Posterior vena cava (tissue), 2 donors: ENCODE measurements at regions of chr6 and their contacts with region 1.

Region 1: GRCh38 chr6:29649701-29650673 is 6.9 kb upstream of the MOG start:
- DNase-seq: peak; percentile 100

Region 2: DNA sequence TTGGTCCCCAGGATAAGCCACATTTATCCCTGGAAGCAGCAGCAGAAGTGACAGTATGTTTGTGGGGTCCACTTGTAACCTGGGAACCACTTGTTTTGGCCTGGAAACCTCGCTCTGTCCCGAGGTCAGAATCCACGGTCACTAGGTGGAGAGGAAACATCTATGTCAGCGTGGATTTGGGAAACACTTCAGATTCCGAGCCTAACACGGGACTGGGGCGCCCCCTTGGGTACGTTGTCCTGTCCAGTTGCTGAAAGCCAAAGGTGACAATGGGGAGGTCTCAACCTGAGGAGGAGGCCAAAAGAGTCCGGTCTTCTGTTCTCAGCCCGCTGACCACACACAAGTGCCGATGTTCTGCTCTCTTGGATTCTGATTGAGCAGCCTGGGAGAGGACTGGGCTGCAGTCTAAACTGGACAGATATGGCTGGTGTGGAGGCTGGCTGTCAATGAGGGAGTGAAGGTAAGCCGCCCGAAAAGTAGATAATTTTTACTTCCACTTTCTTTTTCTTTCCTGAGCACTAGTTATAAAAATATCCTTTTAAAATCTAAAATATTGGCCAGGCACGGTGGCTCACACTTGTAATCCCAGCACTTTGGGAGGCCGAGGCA is 35.8 kb after region 1 on chr6:
- intact Hi-C with region 1: loop called in 1 of 2 experiments (anchors 5 kb)
- DNase-seq: no peak

Region 3: GRCh38 chr6:29705389-29706231 is 55.6 kb after region 1 on chr6:
- intact Hi-C with region 1: no loop called
- DNase-seq: no peak